Gastrocnemius medialis (tissue), 4 donors: ENCODE measurements at regions of chr4 and their contacts with region 1.

Region 1: DNA sequence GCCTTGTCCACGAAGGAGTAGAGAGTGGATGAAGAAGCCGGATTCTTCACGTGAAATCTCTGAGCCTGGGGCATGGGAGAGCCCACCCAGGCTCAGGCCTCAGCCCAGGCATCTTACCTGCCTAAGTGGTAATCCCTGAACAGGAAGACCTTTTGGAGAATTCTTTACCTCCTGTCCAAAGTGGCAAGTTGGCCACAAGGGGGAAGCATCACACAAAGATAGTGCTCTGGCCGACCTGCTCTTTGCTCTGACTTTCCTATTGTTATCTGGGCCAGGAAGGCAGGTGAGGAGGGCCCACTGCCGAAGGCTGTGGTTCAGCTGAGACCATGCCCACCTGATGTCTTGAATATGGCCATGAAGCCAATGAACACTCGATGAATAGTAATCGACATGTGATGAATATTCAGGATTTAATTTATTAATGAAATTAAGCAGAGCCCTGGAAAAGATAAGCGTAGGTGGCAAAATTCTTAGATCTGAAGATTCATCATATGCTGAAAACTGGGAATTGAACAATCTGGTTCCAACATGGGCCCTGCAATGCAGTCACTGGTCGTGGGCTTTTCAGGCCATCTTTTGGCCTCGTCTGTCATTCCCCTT is 93.8 kb downstream of the PDGFRA start:
- DNase-seq: peak; percentile 23 to 30
- ATAC-seq: peak; percentile 55 to 66
- H3K4me3 ChIP-seq: no peak overlapping the region
- H3K27ac ChIP-seq: no peak overlapping the region
- H3K4me1 ChIP-seq: no peaks in the 10 kb centered on the region
- H3K27me3 ChIP-seq: no peaks in the 10 kb centered on the region
- CTCF ChIP-seq: peak; percentile 26 to 67 (median 63)
- POLR2A ChIP-seq: no peak

Region 2: GRCh38 chr4:53734584-53735353 is 588.1 kb before region 1 on chr4:
- in situ Hi-C with region 1: no loop called
- intact Hi-C with region 1: no loop called
- DNase-seq: no peak
- ATAC-seq: no peak
- H3K4me3 ChIP-seq: no peak overlapping the region
- H3K27ac ChIP-seq: no peak overlapping the region
- H3K4me1 ChIP-seq: no peaks in the 10 kb centered on the region
- H3K27me3 ChIP-seq: no peaks in the 10 kb centered on the region
- CTCF ChIP-seq: no peak
- POLR2A ChIP-seq: no peak

Region 3: DNA sequence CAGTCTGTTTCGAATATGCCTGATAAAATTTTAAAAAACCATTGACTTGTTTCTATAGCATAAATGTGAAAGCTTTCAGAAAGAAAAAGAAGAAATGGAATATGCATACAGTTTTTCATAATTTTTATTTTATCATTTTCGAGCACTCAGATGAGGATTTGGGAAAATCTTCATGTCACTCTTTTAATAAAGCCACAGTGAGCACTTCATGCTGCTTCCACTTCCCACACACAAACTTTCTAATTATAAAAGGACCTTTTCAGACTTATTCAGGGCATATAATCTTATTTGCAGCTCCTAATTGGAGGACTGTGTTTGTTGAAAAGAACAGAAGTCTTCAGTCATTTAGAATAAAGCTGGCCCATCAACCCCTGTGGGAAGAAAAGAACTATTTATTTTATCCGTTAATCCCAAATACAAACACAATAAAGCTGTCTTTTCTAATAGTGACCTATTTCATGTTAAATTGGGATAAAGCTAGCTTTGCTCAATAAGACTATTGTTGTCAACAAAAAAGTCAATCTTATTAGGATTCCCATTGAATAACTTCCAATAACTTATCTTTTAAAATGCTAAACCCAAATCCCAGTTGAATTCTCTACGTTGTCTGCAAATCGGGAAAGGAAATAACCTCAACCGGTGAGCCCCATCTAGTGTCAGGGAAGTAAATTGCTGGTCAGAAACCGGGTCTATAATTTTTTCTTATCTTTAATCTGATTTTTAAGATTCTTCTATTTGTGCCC is 117.6 kb after region 1 on chr4:
- in situ Hi-C with region 1: loop called in 3 of 4 experiments (anchors 5 to 10 kb)
- intact Hi-C with region 1: loop called (anchors 1 kb)
- DNase-seq: no peak
- ATAC-seq: peak; percentile 57 to 67
- H3K4me3 ChIP-seq: peak overlapping the region; percentile 43 to 65 (median 49)
- H3K27ac ChIP-seq: peak overlapping the region; percentile 45 to 66 (median 55)
- H3K4me1 ChIP-seq: peaks cover 0 to 7% of the 10 kb centered on the region in 2 donors
- H3K27me3 ChIP-seq: no peaks in the 10 kb centered on the region
- CTCF ChIP-seq: peak; percentile 43 to 75 (median 60)
- POLR2A ChIP-seq: no peak

Region 4: DNA sequence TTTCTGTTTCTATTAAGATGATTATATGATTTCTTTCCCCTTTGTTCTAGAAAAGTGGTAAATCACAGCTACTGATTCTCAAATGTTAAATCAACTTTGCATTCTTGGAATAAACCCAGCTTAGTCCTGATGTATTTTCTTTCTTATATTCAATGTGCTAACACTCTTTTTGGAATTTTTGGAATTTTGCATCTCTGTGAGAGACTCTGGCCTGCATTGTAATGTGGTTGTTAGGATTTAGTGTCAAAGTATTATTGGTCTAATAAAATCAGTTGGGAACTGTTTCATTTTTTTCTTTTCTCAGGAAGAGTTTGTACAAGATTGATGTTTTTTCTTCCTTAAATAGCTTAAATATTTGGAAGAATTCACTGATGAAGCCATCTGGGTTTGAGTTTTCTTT is 444.5 kb after region 1 on chr4:
- in situ Hi-C with region 1: no loop called
- intact Hi-C with region 1: no loop called
- DNase-seq: no peak
- ATAC-seq: no peak
- H3K4me3 ChIP-seq: no peak overlapping the region
- H3K27ac ChIP-seq: no peak overlapping the region
- H3K4me1 ChIP-seq: no peaks in the 10 kb centered on the region
- H3K27me3 ChIP-seq: no peaks in the 10 kb centered on the region
- CTCF ChIP-seq: no peak
- POLR2A ChIP-seq: no peak

Region 5: DNA sequence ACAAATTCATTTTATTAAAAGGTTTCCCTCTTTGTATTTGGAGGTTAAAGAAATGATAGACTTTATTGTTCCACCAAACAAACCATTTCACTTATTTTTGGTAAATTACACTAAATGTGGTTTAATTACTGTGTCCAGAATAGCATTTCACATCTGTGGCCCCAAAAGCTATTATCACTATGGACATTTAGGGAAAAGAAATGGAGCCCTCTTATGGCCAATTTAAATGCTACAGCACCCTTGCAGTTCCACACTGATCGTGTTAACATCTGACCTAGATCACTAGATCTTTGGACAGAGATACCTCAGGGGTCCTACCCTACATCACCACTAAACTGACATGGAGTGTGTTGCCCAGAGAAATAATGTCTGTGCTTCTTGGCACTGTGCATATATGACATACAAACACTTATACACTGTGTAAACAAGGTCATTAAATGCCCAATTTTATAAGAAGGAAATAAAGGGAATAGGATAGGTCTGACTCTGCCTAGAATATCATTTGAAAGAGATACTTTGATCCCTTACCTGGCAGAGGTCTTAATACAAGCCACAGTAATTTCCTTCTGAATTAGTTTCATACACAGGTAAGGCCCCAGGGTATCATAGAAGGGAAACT is 638.5 kb after region 1 on chr4:
- in situ Hi-C with region 1: loop called in 1 of 4 experiments (anchors 10 kb)
- intact Hi-C with region 1: no loop called
- DNase-seq: no peak
- ATAC-seq: no peak
- H3K4me3 ChIP-seq: no peak overlapping the region
- H3K27ac ChIP-seq: no peak overlapping the region
- H3K4me1 ChIP-seq: no peaks in the 10 kb centered on the region
- H3K27me3 ChIP-seq: no peaks in the 10 kb centered on the region
- CTCF ChIP-seq: peak in 3 of 5 experiments; percentile 9 to 38 (median 36)
- POLR2A ChIP-seq: no peak

Region 6: GRCh38 chr4:55312489-55313101 is 989.7 kb after region 1 on chr4:
- in situ Hi-C with region 1: no loop called
- intact Hi-C with region 1: loop called (anchors 10 kb)
- DNase-seq: peak; percentile 24 to 59
- ATAC-seq: peak; percentile 73 to 85
- H3K4me3 ChIP-seq: no peak overlapping the region
- H3K27ac ChIP-seq: peak overlapping the region in 1 of 4 donors; percentile 6
- H3K4me1 ChIP-seq: no peaks in the 10 kb centered on the region
- H3K27me3 ChIP-seq: no peaks in the 10 kb centered on the region
- CTCF ChIP-seq: peak in 2 of 5 experiments; percentile 49 to 55
- POLR2A ChIP-seq: no peak